ENCODE measurements at regions of chr11 and their contacts with region 1.

Region 1: GRCh38 chr11:68383976-68384501 is 71.6 kb downstream of the LRP5 start:
- DNase-seq: peak in 8 of 10 donors; percentile 34 to 93 (median 72)

Region 2: DNA sequence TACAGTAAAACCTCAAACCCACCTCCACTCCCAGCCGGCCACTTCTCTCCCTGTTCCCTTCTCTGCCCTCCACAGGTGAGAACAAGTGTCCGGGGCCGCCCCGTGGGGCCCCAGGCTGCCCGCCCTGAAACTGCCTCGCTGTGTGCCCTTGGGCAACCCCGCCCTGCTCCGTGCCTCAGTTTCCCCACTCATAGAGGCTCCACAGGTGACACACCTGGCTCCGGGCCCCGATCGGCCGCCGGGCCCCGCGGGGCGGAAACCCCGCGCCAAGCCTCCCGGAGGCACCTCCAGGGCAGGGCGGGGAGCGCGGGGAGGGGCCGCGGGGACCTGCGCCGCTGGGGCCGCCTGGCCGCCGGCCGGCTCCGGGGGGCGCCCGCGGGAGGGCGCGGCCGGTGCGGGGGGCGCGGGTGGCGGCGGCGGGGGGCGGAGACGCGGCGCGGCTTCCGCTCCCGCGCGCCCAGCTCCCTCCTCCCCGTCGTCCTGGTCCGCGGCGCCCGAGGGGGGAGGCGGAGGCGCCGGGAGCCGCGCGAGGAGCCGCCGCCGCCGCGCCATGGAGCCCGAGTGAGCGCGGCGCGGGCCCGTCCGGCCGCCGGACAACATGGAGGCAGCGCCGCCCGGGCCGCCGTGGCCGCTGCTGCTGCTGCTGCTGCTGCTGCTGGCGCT is 71.8 kb before region 1 on chr11 and contains the start of gene LRP5:
- intact Hi-C with region 1: loop called (anchors 5 kb)
- DNase-seq: peak in 2 of 10 donors; percentile 37 to 78

Region 3: DNA sequence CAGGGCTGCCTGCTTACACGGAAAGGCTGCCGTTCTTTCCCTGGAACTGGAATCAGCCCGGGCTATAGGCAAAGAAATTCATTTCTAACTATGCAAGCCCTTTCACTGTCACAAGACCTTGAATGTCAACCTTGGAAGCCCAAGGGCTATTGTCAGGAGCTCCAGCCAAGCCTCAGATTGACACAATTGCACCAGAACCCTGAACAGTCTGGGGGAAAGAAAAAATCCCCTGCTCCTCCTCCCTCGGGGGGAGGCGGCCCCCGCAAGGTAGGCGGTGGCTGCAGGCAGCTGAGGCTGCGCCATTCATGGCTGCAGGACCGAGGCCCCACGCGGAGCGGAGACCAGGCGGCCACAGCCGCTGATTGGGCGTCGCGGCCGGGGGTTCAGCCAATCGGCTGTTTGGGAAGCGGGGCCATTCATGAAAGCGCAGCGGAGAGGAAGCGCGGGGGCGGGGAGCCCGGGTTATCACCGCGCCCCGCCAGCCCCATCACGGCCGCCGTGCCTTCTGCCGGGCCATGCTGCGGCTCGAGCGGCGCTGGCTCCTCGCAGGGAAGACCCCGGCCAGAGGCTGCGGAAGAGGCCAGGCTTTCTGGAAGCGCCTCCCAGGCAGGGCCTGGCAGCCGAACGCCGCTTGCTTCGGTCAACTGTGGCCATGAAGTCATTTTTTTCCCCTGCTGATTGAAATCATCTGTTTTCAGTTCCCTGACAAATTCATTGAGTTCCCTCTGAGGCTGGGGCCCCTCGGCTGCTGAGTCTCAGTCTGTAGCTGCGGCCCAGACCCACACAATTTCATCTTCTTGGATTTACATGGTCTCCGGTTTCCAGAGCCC is 1059.3 kb after region 1 on chr11:
- intact Hi-C with region 1: no loop called
- DNase-seq: peak; percentile 75 to 99 (median 89)

Measured in posterior cingulate gyrus (tissue), 11 donors.